IMR-90 (cell line): ENCODE measurements at regions of chr12 and their contacts with region 1.

Region 1: GRCh38 chr12:12786716-12787601 is 1.5 kb downstream of the APOLD1 start:
- DNase-seq: peak; percentile 81
- ATAC-seq: peak; percentile 93
- H3K4me3 ChIP-seq: peak overlapping the region; percentile 60
- H3K27ac ChIP-seq: peak overlapping the region; percentile 90
- H3K4me1 ChIP-seq: peaks cover 15% of the 10 kb centered on the region
- H3K27me3 ChIP-seq: no peaks in the 10 kb centered on the region
- CTCF ChIP-seq: no peak
- POLR2A ChIP-seq: no peak
- RAD21 ChIP-seq: no peak

Region 2: GRCh38 chr12:12837025-12837872 is 50.3 kb after region 1 on chr12:
- CTCF ChIA-PET with region 1: interaction called, 6 read pairs
- POLR2A ChIA-PET with region 1: no interaction called
- dilution Hi-C with region 1: no loop called
- in situ Hi-C with region 1: no loop called
- intact Hi-C with region 1: loop called (anchors 5 kb)
- DNase-seq: peak; percentile 84
- ATAC-seq: peak; percentile 85
- H3K4me3 ChIP-seq: no peak overlapping the region
- H3K27ac ChIP-seq: peak overlapping the region; percentile 47
- H3K4me1 ChIP-seq: peaks cover 20% of the 10 kb centered on the region
- H3K27me3 ChIP-seq: no peaks in the 10 kb centered on the region
- CTCF ChIP-seq: peak; percentile 73
- POLR2A ChIP-seq: no peak
- RAD21 ChIP-seq: peak; percentile 79

Region 3: GRCh38 chr12:12890815-12891645 is 104.1 kb after region 1 on chr12 and contains the start of gene GPRC5A:
- CTCF ChIA-PET with region 1: interaction called, 4 read pairs
- POLR2A ChIA-PET with region 1: no interaction called
- dilution Hi-C with region 1: no loop called
- in situ Hi-C with region 1: no loop called
- intact Hi-C with region 1: loop called (anchors 1 kb)
- DNase-seq: peak; percentile 98
- ATAC-seq: peak; percentile 90
- H3K4me3 ChIP-seq: peak within 1 kb of the TSS; percentile 72
- H3K27ac ChIP-seq: peak within 1 kb of the TSS; percentile 78
- H3K4me1 ChIP-seq: peaks cover 9% of the 10 kb centered on the region
- H3K27me3 ChIP-seq: no peaks in the 10 kb centered on the region
- CTCF ChIP-seq: peak; percentile 47
- POLR2A ChIP-seq: peak; percentile 98
- RAD21 ChIP-seq: peak; percentile 58
- total RNA-seq, gene GPRC5A: 49.6 and 49.7 TPM in 2 replicates

Region 4: GRCh38 chr12:12916135-12916944 is 129.4 kb after region 1 on chr12:
- CTCF ChIA-PET with region 1: no interaction called
- POLR2A ChIA-PET with region 1: no interaction called
- dilution Hi-C with region 1: no loop called
- in situ Hi-C with region 1: no loop called
- intact Hi-C with region 1: loop called (anchors 5 kb)
- DNase-seq: peak; percentile 73
- ATAC-seq: peak; percentile 91
- H3K4me3 ChIP-seq: no peak overlapping the region
- H3K27ac ChIP-seq: no peak overlapping the region
- H3K4me1 ChIP-seq: peaks cover 10% of the 10 kb centered on the region
- H3K27me3 ChIP-seq: no peaks in the 10 kb centered on the region
- CTCF ChIP-seq: peak; percentile 95
- POLR2A ChIP-seq: peak; percentile 56
- RAD21 ChIP-seq: peak; percentile 97

Region 5: GRCh38 chr12:12983420-12984035 is 196.6 kb after region 1 on chr12:
- CTCF ChIA-PET with region 1: interaction called, 4 read pairs
- POLR2A ChIA-PET with region 1: interaction called, 3 read pairs
- dilution Hi-C with region 1: no loop called
- in situ Hi-C with region 1: loop called (anchors 10 kb)
- intact Hi-C with region 1: loop called (anchors 1 kb)
- DNase-seq: peak; percentile 69
- ATAC-seq: peak; percentile 46
- H3K4me3 ChIP-seq: no peak overlapping the region
- H3K27ac ChIP-seq: no peak overlapping the region
- H3K4me1 ChIP-seq: peaks cover 20% of the 10 kb centered on the region
- H3K27me3 ChIP-seq: no peaks in the 10 kb centered on the region
- CTCF ChIP-seq: peak; percentile 79
- POLR2A ChIP-seq: no peak
- RAD21 ChIP-seq: peak; percentile 88

Region 6: DNA sequence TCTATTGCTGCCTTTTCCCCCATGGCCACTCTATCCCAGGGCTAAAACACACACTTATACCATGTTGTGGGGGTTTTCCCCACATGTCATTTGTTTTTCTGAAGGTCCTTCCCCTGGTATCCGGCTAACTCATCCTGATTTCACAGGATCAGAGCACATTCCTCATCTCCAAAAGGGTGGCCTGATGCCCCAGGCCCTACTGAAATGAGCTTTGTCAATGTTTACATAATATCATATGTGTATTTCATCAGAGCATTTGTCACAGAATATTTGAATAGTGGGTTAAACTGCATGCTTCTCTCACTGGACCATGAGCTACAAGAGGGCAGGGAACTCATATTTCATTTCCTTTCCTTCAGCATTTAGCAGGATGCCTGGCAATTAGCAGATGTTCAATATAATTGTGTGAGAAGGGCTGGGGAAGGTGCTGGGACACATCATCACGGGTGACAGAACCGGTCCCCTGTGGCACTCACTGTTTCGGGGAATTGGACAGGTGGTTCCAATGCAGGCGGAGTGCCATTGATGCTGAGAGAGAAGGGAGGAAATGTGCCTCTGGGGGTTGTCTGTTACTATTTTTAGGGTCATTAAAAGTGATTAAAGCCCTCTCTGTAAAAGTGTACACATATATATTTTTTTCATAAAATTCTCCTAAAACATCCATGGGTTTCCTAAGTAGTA is 436.4 kb after region 1 on chr12:
- CTCF ChIA-PET with region 1: no interaction called
- POLR2A ChIA-PET with region 1: no interaction called
- dilution Hi-C with region 1: no loop called
- in situ Hi-C with region 1: no loop called
- intact Hi-C with region 1: loop called (anchors 5 kb)
- DNase-seq: peak; percentile 93
- ATAC-seq: peak; percentile 75
- H3K4me3 ChIP-seq: no peak overlapping the region
- H3K27ac ChIP-seq: peak overlapping the region; percentile 78
- H3K4me1 ChIP-seq: peaks cover 21% of the 10 kb centered on the region
- H3K27me3 ChIP-seq: no peaks in the 10 kb centered on the region
- CTCF ChIP-seq: no peak
- POLR2A ChIP-seq: no peak
- RAD21 ChIP-seq: no peak

Region 7: GRCh38 chr12:13233830-13234641 is 447.1 kb after region 1 on chr12:
- CTCF ChIA-PET with region 1: no interaction called
- POLR2A ChIA-PET with region 1: no interaction called
- dilution Hi-C with region 1: no loop called
- in situ Hi-C with region 1: loop called (anchors 10 kb)
- intact Hi-C with region 1: no loop called
- DNase-seq: peak; percentile 70
- ATAC-seq: peak; percentile 98
- H3K4me3 ChIP-seq: no peak overlapping the region
- H3K27ac ChIP-seq: no peak overlapping the region
- H3K4me1 ChIP-seq: no peaks in the 10 kb centered on the region
- H3K27me3 ChIP-seq: no peaks in the 10 kb centered on the region
- CTCF ChIP-seq: peak; percentile 90
- POLR2A ChIP-seq: no peak
- RAD21 ChIP-seq: peak; percentile 92